Activated T-helper 1 cell treated with anti-CD3 and anti-CD28 coated beads, Interleukin-12 subunit alpha, Interleukin-12 subunit beta, Interleukin-2, Interleukin-4 antibody, amounts not matched to agents 30 ng/mL and 10 ng/mL and 1 ng/mL, durations not matched to agents 14 hours and 24 hours and 36 hours (primary cell): ENCODE measurements at regions of chr16 and their contacts with region 1.

Region 1: GRCh38 chr16:29029168-29029994 is 44.5 kb downstream of the LAT start:
- DNase-seq: peak; percentile 55
- H3K4me3 Mint-ChIP-seq: no peak overlapping the region
- H3K27ac Mint-ChIP-seq: peak overlapping the region; percentile 74
- H3K4me1 Mint-ChIP-seq: peaks cover 38% of the 10 kb centered on the region
- H3K27me3 Mint-ChIP-seq: peaks cover 2% of the 10 kb centered on the region

Region 2: DNA sequence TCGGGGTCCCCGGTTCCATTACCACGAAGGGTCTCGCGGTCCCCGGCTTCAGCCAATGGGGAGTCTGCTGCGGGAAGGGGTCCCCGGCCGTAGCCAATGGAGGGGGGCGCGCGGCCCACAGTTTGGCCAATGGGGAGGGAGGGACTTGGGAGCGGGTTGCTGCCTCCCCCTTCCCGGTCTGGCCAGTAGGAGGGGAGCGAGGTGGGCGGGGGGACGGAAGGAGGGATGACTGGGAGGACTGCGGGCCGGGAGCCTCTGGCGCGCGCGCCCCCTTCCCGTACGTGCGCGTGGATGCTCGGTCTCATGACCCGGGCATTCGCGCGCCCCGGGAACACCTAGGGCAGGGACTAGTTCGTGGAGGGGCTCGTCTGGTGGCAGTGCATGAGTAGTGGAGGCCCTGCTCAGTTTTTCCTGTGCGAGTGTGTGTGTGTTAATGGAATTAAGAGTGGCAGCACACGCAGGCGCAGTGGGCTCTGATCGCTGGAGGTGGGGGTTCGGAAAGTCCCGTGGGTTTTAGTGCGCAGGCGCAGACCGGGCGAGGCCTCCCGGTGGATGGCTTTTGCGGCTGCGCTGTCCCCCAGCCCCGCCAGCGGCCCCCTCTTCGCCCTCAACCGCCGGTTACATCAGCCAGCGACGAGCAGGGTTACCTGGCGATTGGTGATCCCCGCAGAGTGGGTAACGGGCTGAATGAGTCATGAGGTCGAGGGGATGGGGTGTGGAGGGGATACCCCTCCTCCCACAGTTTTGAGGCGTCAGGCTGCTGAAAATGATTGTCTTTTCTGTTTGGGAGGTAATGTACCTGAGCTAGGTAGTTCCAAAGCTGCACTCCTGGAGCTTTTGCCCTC is 205.3 kb before region 1 on chr16:
- intact Hi-C with region 1: loop called (anchors 5 kb)
- DNase-seq: peak; percentile 93
- H3K4me3 Mint-ChIP-seq: peak overlapping the region; percentile 98
- H3K27ac Mint-ChIP-seq: peak overlapping the region; percentile 100
- H3K4me1 Mint-ChIP-seq: peaks cover 52% of the 10 kb centered on the region
- H3K27me3 Mint-ChIP-seq: peaks cover 4% of the 10 kb centered on the region

Region 3: DNA sequence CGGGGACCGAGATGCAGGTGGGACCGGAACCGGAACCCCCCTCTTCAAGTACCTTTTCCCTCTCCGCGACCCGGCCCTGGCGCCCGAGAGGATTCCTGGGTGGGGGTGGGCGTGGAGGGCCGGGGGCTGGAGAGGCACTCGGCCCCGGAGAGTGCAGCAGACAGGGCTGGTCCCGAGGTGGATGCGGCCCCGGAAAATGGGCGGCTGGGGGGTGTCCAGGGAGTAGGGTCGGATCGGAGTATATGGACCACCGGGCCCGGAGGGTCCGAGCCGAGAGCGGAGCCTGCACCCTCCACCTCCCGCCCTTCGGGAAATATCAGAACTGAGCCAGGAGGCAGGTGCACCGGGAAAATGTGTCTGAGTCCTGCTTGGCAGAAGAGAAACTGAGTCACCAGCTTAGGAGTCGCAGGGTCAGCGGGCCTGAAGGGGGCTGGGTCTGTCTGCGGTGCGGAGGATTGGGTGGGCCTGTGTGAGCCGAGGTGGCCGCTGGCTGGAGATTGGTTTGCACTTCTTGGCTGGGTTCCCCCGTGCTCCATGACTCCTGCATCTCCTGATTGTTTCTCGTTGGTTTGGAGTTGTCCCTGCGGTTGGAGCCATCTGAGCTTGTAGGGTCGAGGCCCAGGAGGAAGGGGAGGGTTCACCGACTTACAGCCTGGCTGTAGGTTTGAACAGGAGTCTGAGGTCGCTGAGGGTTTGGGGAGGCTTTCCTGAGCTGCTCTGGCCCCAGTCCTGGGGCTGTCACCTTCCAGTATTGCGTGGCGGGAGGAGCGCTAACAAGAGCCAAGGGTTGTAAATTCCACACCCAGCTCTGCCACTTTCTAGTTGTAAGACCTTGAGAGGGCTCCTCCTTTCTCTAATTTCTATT is 165.2 kb before region 1 on chr16:
- intact Hi-C with region 1: no loop called
- DNase-seq: no peak
- H3K4me3 Mint-ChIP-seq: peak overlapping the region; percentile 93
- H3K27ac Mint-ChIP-seq: peak overlapping the region; percentile 94
- H3K4me1 Mint-ChIP-seq: peaks cover 21% of the 10 kb centered on the region
- H3K27me3 Mint-ChIP-seq: no peaks in the 10 kb centered on the region

Region 4: GRCh38 chr16:28990375-28991040 is 38.9 kb before region 1 on chr16:
- intact Hi-C with region 1: loop called (anchors 1 kb)
- DNase-seq: peak; percentile 29
- H3K4me3 Mint-ChIP-seq: peak overlapping the region; percentile 90
- H3K27ac Mint-ChIP-seq: peak overlapping the region; percentile 82
- H3K4me1 Mint-ChIP-seq: peaks cover 42% of the 10 kb centered on the region
- H3K27me3 Mint-ChIP-seq: no peaks in the 10 kb centered on the region

Region 5: DNA sequence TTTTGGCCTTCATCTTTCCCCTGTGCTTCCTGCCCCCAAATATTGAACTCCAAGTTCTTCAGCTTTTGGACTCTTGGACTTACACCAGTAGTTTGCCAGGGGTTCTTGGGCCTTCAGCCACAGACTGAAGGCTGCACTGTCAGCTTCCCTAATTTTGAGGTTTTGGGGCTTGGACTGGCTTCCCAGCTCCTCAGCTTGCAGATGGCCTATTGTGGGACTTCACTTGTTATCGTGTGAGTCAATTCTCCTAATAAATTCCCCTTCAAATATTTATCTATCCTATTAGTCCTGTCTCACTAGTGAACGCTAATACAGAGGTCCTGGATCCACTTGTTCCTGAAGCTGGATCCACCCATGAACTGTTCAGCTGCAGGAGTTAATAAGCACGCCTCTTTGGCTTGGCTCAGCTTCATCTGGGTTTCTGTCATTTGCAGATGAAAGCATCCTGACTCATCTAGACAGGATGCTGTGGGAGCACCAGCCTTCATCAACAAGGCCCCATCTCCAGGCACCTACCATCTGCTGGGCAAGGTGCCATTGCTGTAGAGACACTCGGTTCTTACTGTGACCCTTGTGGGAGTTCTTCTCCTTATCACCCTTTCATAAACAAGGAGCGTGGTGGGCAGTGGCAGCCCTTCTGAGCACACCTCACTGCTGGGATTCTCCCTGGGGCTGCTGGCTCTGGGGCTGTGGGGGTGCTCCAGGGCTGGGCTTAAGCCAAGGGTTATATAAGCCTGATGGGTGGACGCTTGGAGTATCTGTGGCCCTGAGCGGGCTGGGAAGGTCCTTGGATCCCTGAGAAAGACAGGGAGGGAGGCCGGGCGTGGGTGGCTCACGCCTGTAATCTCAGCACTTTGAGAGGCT is 21.4 kb before region 1 on chr16:
- intact Hi-C with region 1: loop called (anchors 2 kb)
- DNase-seq: peak; percentile 54
- H3K4me3 Mint-ChIP-seq: peak overlapping the region; percentile 69
- H3K27ac Mint-ChIP-seq: peak overlapping the region; percentile 98
- H3K4me1 Mint-ChIP-seq: peaks cover 50% of the 10 kb centered on the region
- H3K27me3 Mint-ChIP-seq: no peaks in the 10 kb centered on the region

Region 6: DNA sequence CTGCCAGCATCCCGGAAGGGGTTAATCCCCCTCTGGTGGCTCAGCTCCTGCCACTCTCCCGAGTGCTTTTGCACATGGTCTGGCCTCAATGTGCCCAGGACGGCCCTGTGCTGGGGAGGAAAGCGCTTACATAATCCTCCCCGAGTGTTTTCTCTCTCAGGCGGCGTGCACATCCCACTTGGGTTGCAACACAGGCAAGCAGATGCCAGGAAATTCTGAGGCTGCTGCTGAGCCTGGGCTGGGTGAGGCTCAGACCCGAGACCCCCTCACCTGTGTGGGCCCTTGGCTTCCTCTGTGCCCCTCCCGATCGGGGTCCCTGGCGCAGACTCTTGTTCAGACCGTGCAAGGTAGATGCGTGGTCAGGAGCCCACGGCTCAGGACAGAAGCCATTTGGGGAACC is 100.1 kb after region 1 on chr16:
- intact Hi-C with region 1: no loop called
- DNase-seq: no peak
- H3K4me3 Mint-ChIP-seq: no peak overlapping the region
- H3K27ac Mint-ChIP-seq: no peak overlapping the region
- H3K4me1 Mint-ChIP-seq: no peaks in the 10 kb centered on the region
- H3K27me3 Mint-ChIP-seq: no peaks in the 10 kb centered on the region

Region 7: GRCh38 chr16:29815793-29816693 is 786.7 kb after region 1 on chr16 and contains the start of gene PAGR1:
- intact Hi-C with region 1: loop called (anchors 10 kb)
- DNase-seq: peak; percentile 99
- H3K4me3 Mint-ChIP-seq: peak within 1 kb of the TSS; percentile 94
- H3K27ac Mint-ChIP-seq: peak within 1 kb of the TSS; percentile 98
- H3K4me1 Mint-ChIP-seq: peaks cover 48% of the 10 kb centered on the region
- H3K27me3 Mint-ChIP-seq: no peaks in the 10 kb centered on the region
- total RNA-seq, gene PAGR1: 29.2 and 30.8 TPM in 2 replicates